Activated naive CD8-positive, alpha-beta T cell treated with anti-CD3 and anti-CD28 coated beads, Interleukin-2, amount 10 ng/mL, durations not matched to agents 7 days and 5 days (primary cell): ENCODE measurements at regions of chr10 and their contacts with region 1.

Region 1: GRCh38 chr10:102101152-102101551 is 19.0 kb downstream of the LDB1 start:
- DNase-seq: no peak
- ATAC-seq: no peak
- H3K4me3 Mint-ChIP-seq: no peak overlapping the region
- H3K27ac Mint-ChIP-seq: no peak overlapping the region
- H3K4me1 Mint-ChIP-seq: peaks cover 20% of the 10 kb centered on the region
- H3K27me3 Mint-ChIP-seq: no peaks in the 10 kb centered on the region

Region 2: GRCh38 chr10:102114861-102115618 is 13.9 kb after region 1 on chr10:
- POLR2A ChIA-PET with region 1: interaction called, 29 read pairs
- DNase-seq: peak; percentile 84
- ATAC-seq: peak; percentile 60
- H3K4me3 Mint-ChIP-seq: peak overlapping the region; percentile 88
- H3K27ac Mint-ChIP-seq: peak overlapping the region; percentile 92
- H3K4me1 Mint-ChIP-seq: peaks cover 49% of the 10 kb centered on the region
- H3K27me3 Mint-ChIP-seq: no peaks in the 10 kb centered on the region